Activated T-helper 2 cell treated with anti-CD3 and anti-CD28 coated beads, Interferon-gamma antibody, Interleukin-2, Interleukin-4, amounts not matched to agents 10 μg/mL and 5 μg/mL and 100 μg/mL, durations not matched to agents 14 hours and 24 hours and 36 hours (primary cell): ENCODE measurements at regions of chr2 and their contacts with region 1.

Region 1: GRCh38 chr2:161077367-161078210 is 82.6 kb upstream of the TANK start:
- DNase-seq: peak; percentile 78
- H3K4me3 Mint-ChIP-seq: peak overlapping the region; percentile 28
- H3K27ac Mint-ChIP-seq: peak overlapping the region; percentile 89
- H3K4me1 Mint-ChIP-seq: peaks cover 51% of the 10 kb centered on the region
- H3K27me3 Mint-ChIP-seq: no peaks in the 10 kb centered on the region

Region 2: GRCh38 chr2:160332318-160332717 is 745.3 kb before region 1 on chr2:
- intact Hi-C with region 1: loop called (anchors 10 kb)
- DNase-seq: no peak
- H3K4me3 Mint-ChIP-seq: no peak overlapping the region
- H3K27ac Mint-ChIP-seq: peak overlapping the region; percentile 41
- H3K4me1 Mint-ChIP-seq: peaks cover 69% of the 10 kb centered on the region
- H3K27me3 Mint-ChIP-seq: no peaks in the 10 kb centered on the region

Region 3: DNA sequence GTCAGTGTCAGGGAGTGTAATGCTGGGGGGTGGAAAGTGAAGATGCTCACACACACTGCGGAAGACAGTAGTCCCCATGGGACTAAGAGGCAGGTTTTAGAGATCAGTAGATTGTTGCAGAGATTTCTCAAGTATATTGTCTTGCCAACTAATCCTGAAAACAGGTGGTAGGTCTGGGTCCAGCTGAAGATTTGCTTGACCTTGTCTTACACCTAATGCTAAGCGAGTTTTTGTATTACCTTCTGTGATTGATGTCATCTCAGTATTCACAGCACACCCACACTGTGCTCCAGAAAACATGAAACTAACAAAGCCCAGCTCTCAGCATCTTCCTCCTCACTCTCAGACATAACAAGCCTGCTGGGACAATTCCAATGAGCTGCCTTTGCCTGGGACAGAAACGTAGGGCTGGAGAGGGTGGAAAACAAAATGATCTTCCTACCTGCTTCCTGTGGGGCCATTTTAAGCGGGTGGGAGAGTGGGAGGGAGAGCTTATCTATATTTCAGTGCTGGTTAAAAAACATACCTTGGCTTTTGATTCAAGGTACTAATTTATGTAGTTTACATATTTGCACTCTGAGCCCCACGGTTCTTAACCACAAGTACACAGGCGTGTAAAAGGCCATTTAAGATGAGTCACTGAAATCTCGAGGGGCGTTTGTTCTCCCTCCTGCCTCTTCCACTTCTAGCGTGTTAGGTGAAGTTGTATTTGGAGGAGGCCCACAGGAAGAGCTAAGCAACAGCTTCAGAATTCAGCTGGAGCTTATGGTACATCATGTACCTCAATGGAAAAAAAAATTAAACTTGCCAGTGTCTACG is 560.8 kb before region 1 on chr2:
- intact Hi-C with region 1: loop called (anchors 2 kb)
- DNase-seq: no peak
- H3K4me3 Mint-ChIP-seq: no peak overlapping the region
- H3K27ac Mint-ChIP-seq: peak overlapping the region; percentile 71
- H3K4me1 Mint-ChIP-seq: peaks cover 35% of the 10 kb centered on the region
- H3K27me3 Mint-ChIP-seq: peaks cover 15% of the 10 kb centered on the region

Region 4: DNA sequence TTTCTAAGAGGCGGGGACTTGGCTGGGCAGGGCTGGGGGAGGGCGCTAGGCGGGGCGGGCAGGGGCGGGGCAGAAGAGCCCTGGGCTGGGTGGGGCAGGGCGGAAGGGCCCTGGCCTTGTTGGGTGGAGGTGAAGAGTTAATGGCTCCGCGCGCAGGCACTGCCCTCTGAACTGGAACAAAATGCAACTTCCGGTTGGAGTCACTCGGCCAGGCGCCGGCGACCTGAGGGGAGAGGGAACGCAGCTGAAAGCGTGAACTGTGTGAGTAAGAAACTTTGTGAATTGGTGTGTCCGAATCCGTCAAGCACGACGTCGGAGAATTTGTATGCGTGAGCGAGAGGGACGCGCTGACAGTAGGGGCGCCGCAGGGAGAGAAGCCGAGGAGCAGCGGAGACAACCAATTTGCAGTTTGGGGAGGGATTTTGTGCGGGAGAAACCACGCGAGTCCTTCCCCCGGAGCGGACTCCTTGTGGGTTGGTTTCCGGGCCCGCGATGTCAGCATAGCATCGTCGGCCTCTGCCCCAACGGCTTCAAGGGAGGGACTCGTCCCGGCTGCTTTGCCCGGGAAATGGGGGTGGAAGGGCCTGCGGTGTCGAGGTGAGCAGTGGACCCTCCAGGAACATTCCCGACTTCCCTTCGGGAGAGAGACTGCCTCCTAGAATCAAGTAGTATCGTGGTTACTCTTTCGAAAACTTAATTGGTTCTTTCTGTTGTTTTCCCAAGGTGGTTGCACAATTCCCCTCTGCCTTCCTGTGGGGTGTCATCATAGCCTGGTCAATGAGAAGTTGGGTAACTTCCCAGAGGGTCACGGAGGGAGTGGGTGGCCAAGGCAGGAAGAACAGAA is 82.9 kb after region 1 on chr2 and contains the start of gene TANK:
- intact Hi-C with region 1: loop called (anchors 1 kb)
- DNase-seq: peak; percentile 90
- H3K4me3 Mint-ChIP-seq: peak within 1 kb of the TSS; percentile 97
- H3K27ac Mint-ChIP-seq: peak within 1 kb of the TSS; percentile 99
- H3K4me1 Mint-ChIP-seq: peaks cover 53% of the 10 kb centered on the region
- H3K27me3 Mint-ChIP-seq: no peaks in the 10 kb centered on the region
- total RNA-seq, gene TANK: 66.2 and 70.7 TPM in 2 replicates

Region 5: GRCh38 chr2:161308178-161308955 is 230.8 kb after region 1 on chr2 and contains the start of gene PSMD14:
- intact Hi-C with region 1: loop called (anchors 1 kb)
- DNase-seq: peak; percentile 89
- H3K4me3 Mint-ChIP-seq: peak within 1 kb of the TSS; percentile 99
- H3K27ac Mint-ChIP-seq: peak within 1 kb of the TSS; percentile 97
- H3K4me1 Mint-ChIP-seq: peaks cover 30% of the 10 kb centered on the region
- H3K27me3 Mint-ChIP-seq: peaks cover 2% of the 10 kb centered on the region
- total RNA-seq, gene PSMD14: 106 and 110 TPM in 2 replicates

Region 6: DNA sequence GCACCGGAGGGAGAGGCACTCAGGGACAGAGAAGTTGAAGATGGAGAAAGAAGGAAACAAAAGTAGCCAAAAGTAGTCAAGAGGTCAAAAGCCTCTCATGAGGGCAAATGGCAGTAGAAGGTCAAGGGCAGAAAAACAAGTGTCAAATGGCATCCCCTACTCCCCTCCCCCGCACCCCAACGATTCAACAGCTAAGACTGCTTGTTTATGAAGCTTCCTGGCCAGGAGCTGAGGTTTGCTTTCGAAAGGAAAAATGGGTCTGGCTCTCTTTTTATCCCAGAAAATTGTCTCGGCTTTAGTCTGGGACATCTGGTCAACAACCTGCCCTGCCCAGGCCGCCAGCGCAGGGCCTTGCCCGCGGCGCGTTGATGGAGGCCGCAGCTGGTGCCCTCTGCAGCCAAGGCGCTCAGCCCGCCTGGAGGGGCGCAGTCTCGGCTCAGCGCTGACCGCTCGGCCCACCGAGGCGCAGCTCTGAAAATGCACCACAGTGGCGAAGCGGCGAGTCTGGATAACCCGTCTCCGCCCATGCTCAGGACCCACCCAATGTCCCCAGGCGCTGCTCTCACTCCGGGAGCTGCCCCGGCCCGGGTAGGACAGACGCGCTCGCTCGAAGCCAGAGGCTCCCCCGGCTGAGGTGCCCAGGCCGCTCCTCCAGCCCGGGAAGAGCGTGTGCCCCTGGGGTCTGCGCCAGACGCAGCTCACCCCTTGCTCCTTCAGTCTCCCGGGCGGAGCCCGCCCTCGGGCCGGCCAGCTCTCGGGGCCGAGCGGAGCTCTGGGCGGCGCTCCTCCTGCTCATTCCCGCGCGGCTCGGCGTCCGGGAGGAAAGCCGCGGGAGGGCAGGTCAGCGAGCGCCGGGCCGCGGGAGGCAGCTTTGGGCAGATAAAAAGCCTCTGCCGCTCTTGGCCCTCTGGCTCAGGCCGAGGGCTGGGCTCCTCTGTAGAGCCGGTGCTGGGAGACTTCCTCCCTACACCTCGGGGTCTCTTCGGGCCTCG is 336.7 kb after region 1 on chr2:
- intact Hi-C with region 1: no loop called
- DNase-seq: peak; percentile 10
- H3K4me3 Mint-ChIP-seq: peak overlapping the region; percentile 31
- H3K27ac Mint-ChIP-seq: no peak overlapping the region
- H3K4me1 Mint-ChIP-seq: peaks cover 46% of the 10 kb centered on the region
- H3K27me3 Mint-ChIP-seq: peaks cover 52% of the 10 kb centered on the region